ENCODE measurements at regions of chr11 and their contacts with region 1.

Region 1: GRCh38 chr11:9460322-9461067 is at the start of gene ZNF143:
- DNase-seq: peak; percentile 100
- H3K4me3 Mint-ChIP-seq: peak within 1 kb of the TSS; percentile 95
- H3K27ac Mint-ChIP-seq: peak within 1 kb of the TSS; percentile 99
- H3K4me1 Mint-ChIP-seq: peaks cover 21% of the 10 kb centered on the region
- H3K27me3 Mint-ChIP-seq: no peaks in the 10 kb centered on the region
- total RNA-seq, gene ZNF143: 45.4 to 48.2 TPM

Region 2: GRCh38 chr11:9003573-9004309 is 456.8 kb before region 1 on chr11 and contains the start of gene NRIP3:
- CTCF ChIA-PET with region 1: no interaction called
- POLR2A ChIA-PET with region 1: no interaction called
- intact Hi-C with region 1: loop called (anchors 5 kb)
- DNase-seq: peak; percentile 74
- H3K4me3 Mint-ChIP-seq: peak within 1 kb of the TSS; percentile 70
- H3K27ac Mint-ChIP-seq: no peak within 1 kb of the TSS
- H3K4me1 Mint-ChIP-seq: peaks cover 27% of the 10 kb centered on the region
- H3K27me3 Mint-ChIP-seq: peaks cover 36% of the 10 kb centered on the region
- total RNA-seq, gene NRIP3: 2.7 to 2.9 TPM

Region 3: GRCh38 chr11:9265211-9266131 is 195.0 kb before region 1 on chr11 and contains the start of gene DENND5A:
- CTCF ChIA-PET with region 1: interaction called, 4 read pairs
- POLR2A ChIA-PET with region 1: interaction called, 7 read pairs
- intact Hi-C with region 1: loop called (anchors 1 kb)
- DNase-seq: peak; percentile 69
- H3K4me3 Mint-ChIP-seq: peak within 1 kb of the TSS; percentile 89
- H3K27ac Mint-ChIP-seq: peak within 1 kb of the TSS; percentile 96
- H3K4me1 Mint-ChIP-seq: peaks cover 30% of the 10 kb centered on the region
- H3K27me3 Mint-ChIP-seq: peaks cover 8% of the 10 kb centered on the region
- total RNA-seq, gene DENND5A: 41.3 to 41.9 TPM

Region 4: DNA sequence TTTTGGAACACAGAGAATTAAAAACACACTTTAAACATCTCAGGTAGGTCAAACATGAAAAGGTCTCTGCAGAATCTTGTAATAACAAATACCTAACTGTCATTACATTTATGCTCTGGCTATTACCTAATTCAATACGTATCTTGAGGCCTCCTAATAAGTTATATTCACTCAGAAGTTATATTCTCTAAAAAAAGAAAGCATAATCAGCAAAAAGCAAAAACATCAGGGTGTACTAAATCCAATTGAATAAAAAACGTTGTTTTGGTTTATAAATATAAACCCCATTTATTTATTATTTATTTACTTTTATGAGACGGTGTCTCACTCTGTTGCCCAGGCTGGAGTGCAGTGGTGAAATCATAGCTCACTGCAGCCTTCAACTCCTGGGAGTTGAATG is 156.3 kb before region 1 on chr11:
- CTCF ChIA-PET with region 1: no interaction called
- POLR2A ChIA-PET with region 1: no interaction called
- intact Hi-C with region 1: no loop called
- DNase-seq: no peak
- H3K4me3 Mint-ChIP-seq: no peak overlapping the region
- H3K27ac Mint-ChIP-seq: no peak overlapping the region
- H3K4me1 Mint-ChIP-seq: peaks cover 12% of the 10 kb centered on the region
- H3K27me3 Mint-ChIP-seq: no peaks in the 10 kb centered on the region

Region 5: DNA sequence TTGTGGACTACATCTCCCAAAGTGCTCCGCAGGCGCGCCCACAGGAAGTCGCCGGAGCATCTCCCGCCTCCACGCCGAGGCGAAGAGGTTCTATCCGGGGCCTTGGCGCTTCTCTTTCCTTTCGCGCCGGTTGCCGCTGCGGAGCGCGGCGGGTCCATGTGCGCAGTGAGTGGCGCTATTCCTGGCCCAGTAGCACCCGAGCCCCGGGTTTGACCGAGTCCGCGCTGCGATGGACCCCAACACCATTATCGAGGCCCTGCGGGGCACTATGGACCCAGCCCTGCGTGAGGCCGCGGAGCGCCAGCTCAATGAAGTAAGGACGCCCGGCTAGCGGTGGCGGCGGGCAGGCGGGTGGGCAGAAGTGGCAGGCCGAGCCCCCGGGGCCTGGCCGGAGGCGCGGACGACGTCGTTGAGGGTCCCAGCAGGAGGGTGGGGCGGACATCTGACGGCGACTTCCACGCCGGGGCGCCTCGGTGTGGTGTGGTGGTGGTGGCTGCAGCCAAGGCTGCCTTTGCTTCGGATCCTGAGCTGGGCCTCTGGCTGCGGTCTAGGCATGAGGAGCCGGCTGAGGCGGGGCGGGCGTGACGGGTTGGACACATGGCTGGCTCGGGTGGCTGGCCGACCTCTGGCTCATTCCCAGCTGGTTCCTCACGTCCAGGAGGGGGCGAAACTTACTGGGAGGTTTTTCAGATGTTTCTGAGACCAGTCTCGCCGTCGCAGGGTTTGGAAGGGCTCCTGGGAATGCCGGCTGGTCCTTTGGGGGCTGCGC is 75.8 kb before region 1 on chr11 and contains the start of gene IPO7:
- CTCF ChIA-PET with region 1: interaction called, 7 read pairs
- POLR2A ChIA-PET with region 1: interaction called, 31 read pairs
- intact Hi-C with region 1: loop called (anchors 1 kb)
- DNase-seq: peak; percentile 93
- H3K4me3 Mint-ChIP-seq: peak within 1 kb of the TSS; percentile 96
- H3K27ac Mint-ChIP-seq: peak within 1 kb of the TSS; percentile 87
- H3K4me1 Mint-ChIP-seq: peaks cover 29% of the 10 kb centered on the region
- H3K27me3 Mint-ChIP-seq: no peaks in the 10 kb centered on the region
- total RNA-seq, gene IPO7: 161 to 172 TPM

Region 6: DNA sequence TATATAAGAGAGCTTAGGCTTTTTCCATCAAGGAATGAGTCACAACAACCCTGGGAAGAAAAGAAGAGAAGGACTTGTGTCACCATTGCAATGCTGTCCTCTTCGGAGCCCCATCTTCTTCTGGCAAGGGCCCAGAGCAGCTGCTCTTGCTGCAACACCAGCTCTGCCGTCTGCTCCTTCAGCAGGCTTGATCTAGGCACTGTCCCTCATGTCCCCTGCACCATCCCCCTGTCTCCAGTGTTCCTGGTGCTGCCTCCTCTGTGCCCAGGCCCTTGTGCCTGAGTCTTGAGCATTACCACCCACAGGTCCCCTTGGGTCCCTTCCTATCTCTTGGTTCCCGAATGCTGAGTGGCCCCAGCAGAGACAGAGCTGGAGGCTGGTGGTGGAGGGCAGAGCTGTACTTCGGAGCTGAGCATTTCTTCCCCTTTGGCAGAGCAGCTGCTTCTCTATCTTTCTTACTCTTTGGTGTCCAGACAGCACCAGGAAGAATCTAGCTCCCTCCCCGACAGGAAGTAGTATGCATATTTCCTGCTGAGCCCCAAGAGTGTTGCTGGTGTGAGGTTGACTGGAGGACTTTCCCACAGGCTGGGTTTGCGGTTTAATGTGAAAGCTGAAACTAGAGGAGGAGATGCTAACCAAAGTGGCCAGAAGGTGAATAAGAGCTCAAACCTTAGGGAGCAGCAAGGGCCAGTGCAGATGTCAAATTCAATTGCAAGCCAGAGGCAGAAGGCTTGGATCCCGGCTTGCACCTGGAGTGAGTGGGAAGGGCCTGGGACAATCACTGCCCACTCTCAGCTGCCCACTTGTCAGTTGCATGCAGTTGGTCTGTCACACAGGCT is 140.8 kb after region 1 on chr11:
- CTCF ChIA-PET with region 1: no interaction called
- POLR2A ChIA-PET with region 1: interaction called, 5 read pairs
- intact Hi-C with region 1: loop called (anchors 1 kb)
- DNase-seq: peak; percentile 87
- H3K4me3 Mint-ChIP-seq: peak overlapping the region; percentile 68
- H3K27ac Mint-ChIP-seq: peak overlapping the region; percentile 84
- H3K4me1 Mint-ChIP-seq: peaks cover 24% of the 10 kb centered on the region
- H3K27me3 Mint-ChIP-seq: no peaks in the 10 kb centered on the region

Region 7: GRCh38 chr11:10004526-10005113 is 544.1 kb after region 1 on chr11:
- CTCF ChIA-PET with region 1: no interaction called
- POLR2A ChIA-PET with region 1: no interaction called
- intact Hi-C with region 1: no loop called
- DNase-seq: no peak
- H3K4me3 Mint-ChIP-seq: no peak overlapping the region
- H3K27ac Mint-ChIP-seq: no peak overlapping the region
- H3K4me1 Mint-ChIP-seq: no peaks in the 10 kb centered on the region
- H3K27me3 Mint-ChIP-seq: no peaks in the 10 kb centered on the region

Region 8: GRCh38 chr11:10307442-10308207 is 847.1 kb after region 1 on chr11:
- CTCF ChIA-PET with region 1: no interaction called
- POLR2A ChIA-PET with region 1: interaction called, 3 read pairs
- intact Hi-C with region 1: loop called (anchors 5 kb)
- DNase-seq: peak; percentile 90
- H3K4me3 Mint-ChIP-seq: peak overlapping the region; percentile 89
- H3K27ac Mint-ChIP-seq: peak overlapping the region; percentile 71
- H3K4me1 Mint-ChIP-seq: peaks cover 38% of the 10 kb centered on the region
- H3K27me3 Mint-ChIP-seq: peaks cover 42% of the 10 kb centered on the region

Region 9: DNA sequence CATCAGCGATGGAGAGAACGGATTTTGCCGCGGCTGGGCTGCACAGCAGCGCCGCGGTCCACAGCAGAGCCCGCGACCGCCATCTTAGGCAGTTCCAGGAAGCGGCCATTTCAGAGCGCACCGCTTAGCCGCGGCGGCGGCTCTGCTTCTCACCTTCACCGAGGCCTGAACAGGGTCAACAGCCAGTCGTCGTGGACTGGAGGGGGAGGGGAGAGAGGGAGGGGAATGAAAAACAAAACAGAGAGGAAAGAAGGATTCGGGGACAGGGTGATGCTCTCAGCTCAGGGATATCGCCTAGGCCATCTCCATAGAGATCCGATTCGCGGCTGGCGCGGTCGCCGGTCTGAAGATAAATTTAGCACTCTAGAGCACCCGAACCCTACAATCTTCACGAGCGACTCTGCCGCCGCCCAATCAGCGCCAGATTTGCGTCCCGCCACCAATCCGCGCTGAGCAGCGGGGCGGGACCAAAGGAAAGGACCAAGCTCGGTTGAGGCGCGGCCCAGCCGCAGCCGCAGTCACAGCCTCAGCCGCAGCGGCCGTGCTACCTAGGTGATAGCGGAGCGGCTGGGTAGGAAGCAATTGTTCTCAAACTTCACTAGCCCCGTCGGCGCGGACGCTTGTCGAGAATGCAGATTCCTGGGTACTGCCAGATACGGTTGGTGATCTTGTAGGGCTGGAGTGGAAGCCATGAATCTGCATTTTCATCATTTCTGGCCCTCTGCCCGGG is 1397.4 kb after region 1 on chr11 and contains the start of gene ZBED5:
- CTCF ChIA-PET with region 1: no interaction called
- POLR2A ChIA-PET with region 1: no interaction called
- intact Hi-C with region 1: loop called (anchors 2 kb)
- DNase-seq: peak; percentile 98
- H3K4me3 Mint-ChIP-seq: peak within 1 kb of the TSS; percentile 97
- H3K27ac Mint-ChIP-seq: peak within 1 kb of the TSS; percentile 99
- H3K4me1 Mint-ChIP-seq: peaks cover 33% of the 10 kb centered on the region
- H3K27me3 Mint-ChIP-seq: no peaks in the 10 kb centered on the region
- total RNA-seq, gene ZBED5: 39.8 to 43.3 TPM